Lower lobe of right lung (tissue), 2 donors: ENCODE measurements at regions of chr15 and their contacts with region 1.

Region 1: GRCh38 chr15:101008158-101009139 is 89.3 kb downstream of the LRRK1 start:
- DNase-seq: peak; percentile 90
- ATAC-seq: peak; percentile 94 to 95
- H3K4me3 ChIP-seq: peak overlapping the region; percentile 60
- H3K27ac ChIP-seq: peak overlapping the region; percentile 43
- H3K4me1 ChIP-seq: peaks cover 17% of the 10 kb centered on the region
- H3K27me3 ChIP-seq: no peaks in the 10 kb centered on the region
- CTCF ChIP-seq: peak; percentile 98

Region 2: DNA sequence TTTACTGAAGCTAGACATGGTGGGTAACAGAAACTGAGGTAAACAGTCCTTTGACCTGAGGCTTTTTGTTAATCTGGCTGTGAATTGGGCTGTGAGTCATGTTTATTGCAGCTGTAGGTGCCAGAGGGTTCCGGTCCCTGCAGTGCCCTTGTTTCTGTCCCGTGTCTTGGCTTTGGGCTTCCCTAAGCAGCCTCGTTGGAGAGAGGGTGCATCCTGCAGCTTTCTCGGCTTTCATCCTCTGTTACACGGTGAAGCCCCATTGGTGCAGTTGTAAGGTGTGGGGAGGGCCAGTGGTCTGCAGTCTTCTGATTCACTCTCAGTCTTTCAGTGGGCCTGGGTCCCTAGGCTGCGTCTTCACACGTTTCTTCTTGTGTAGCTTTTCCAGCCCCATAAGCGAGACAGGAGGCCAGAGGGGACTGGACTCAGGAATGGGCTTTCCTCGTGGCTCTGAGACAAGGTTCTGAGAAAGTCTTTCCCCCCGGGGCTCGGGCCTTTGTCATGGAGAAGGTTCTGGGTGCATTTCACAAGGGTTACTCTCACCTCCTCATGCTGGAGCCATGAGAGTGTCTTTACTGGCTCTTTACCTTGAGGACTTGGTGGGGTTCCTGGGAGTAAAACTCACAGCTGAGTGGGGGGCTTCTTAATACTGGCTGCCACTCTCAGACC is 372.9 kb before region 1 on chr15:
- intact Hi-C with region 1: loop called (anchors 10 kb)
- DNase-seq: no peak
- ATAC-seq: no peak
- H3K4me3 ChIP-seq: no peak overlapping the region
- H3K27ac ChIP-seq: no peak overlapping the region
- H3K4me1 ChIP-seq: no peaks in the 10 kb centered on the region
- H3K27me3 ChIP-seq: no peaks in the 10 kb centered on the region
- CTCF ChIP-seq: no peak

Region 3: GRCh38 chr15:100759698-100760356 is 248.6 kb before region 1 on chr15:
- intact Hi-C with region 1: no loop called
- DNase-seq: no peak
- ATAC-seq: peak; percentile 26 to 34
- H3K4me3 ChIP-seq: no peak overlapping the region
- H3K27ac ChIP-seq: no peak overlapping the region
- H3K4me1 ChIP-seq: no peaks in the 10 kb centered on the region
- H3K27me3 ChIP-seq: no peaks in the 10 kb centered on the region
- CTCF ChIP-seq: no peak

Region 4: GRCh38 chr15:100918034-100918689 is 90.3 kb before region 1 on chr15:
- intact Hi-C with region 1: loop called (anchors 10 kb)
- DNase-seq: peak; percentile 92
- ATAC-seq: peak; percentile 95
- H3K4me3 ChIP-seq: peak overlapping the region; percentile 70
- H3K27ac ChIP-seq: peak overlapping the region; percentile 79
- H3K4me1 ChIP-seq: peaks cover 29% of the 10 kb centered on the region
- H3K27me3 ChIP-seq: no peaks in the 10 kb centered on the region
- CTCF ChIP-seq: peak; percentile 96